Activated CD8-positive, alpha-beta T cell treated with anti-CD3 and anti-CD28 coated beads for 36 hours (primary cell): ENCODE measurements at regions of chr5 and their contacts with region 1.

Region 1: GRCh38 chr5:32076699-32077695 is 97.1 kb downstream of the GOLPH3 start:
- DNase-seq: peak; percentile 69
- ATAC-seq: no peak
- H3K4me3 Mint-ChIP-seq: no peak overlapping the region
- H3K27ac Mint-ChIP-seq: no peak overlapping the region
- H3K4me1 Mint-ChIP-seq: no peaks in the 10 kb centered on the region
- H3K27me3 Mint-ChIP-seq: no peaks in the 10 kb centered on the region
- CTCF ChIP-seq: peak; percentile 85

Region 2: GRCh38 chr5:31581498-31582099 is 495.4 kb before region 1 on chr5:
- CTCF ChIA-PET with region 1: interaction called, 5 read pairs
- POLR2A ChIA-PET with region 1: no interaction called
- intact Hi-C with region 1: loop called (anchors 5 kb)
- DNase-seq: no peak
- ATAC-seq: no peak
- H3K4me3 Mint-ChIP-seq: no peak overlapping the region
- H3K27ac Mint-ChIP-seq: no peak overlapping the region
- H3K4me1 Mint-ChIP-seq: no peaks in the 10 kb centered on the region
- H3K27me3 Mint-ChIP-seq: peaks cover 17% of the 10 kb centered on the region
- CTCF ChIP-seq: peak; percentile 60

Region 3: GRCh38 chr5:31825518-31826068 is 251.4 kb before region 1 on chr5:
- CTCF ChIA-PET with region 1: interaction called, 40 read pairs
- POLR2A ChIA-PET with region 1: no interaction called
- intact Hi-C with region 1: loop called (anchors 5 kb)
- DNase-seq: peak; percentile 62
- ATAC-seq: peak; percentile 68
- H3K4me3 Mint-ChIP-seq: no peak overlapping the region
- H3K27ac Mint-ChIP-seq: no peak overlapping the region
- H3K4me1 Mint-ChIP-seq: peaks cover 3% of the 10 kb centered on the region
- H3K27me3 Mint-ChIP-seq: peaks cover 12% of the 10 kb centered on the region
- CTCF ChIP-seq: peak; percentile 51

Region 4: DNA sequence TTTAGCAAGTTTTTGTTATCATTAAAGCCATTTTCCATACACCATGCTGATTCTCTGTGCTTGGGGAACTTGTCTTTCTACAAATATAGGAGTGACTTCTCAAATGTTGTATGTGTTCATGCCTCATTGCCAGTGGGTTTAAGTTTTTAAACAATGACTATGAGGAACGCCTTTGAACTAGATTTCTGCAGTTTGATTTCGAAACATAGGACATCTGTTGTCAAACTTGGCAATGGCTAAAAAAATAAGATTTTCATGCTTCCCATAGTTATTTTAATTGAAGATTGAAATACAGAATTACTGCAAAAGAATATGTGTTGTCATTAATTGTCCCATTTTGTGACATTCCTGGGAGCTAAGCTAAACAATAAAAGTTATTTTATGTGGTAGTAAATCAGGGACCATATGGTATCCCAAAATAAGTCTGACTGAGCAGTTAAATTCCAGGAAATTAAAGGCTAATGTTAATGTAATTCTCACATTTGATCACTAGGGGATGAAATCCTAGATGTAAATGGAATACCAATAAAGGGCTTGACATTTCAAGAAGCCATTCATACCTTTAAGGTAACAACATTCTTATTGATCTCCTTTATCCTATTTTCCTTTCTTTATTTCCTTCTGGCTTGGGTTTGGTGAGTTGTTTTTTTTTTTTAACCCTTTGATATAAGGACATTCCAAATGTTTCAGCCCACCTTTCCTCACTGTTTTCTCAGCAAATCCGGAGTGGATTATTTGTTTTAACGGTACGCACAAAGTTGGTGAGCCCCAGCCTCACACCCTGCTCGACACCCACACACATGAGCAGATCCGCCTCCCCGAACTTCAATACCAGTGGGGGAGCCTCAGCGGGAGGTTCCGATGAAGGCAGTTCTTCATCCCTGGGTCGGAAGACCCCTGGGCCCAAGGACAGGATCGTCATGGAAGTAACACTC is 19.6 kb before region 1 on chr5:
- CTCF ChIA-PET with region 1: interaction called, 13 read pairs
- POLR2A ChIA-PET with region 1: no interaction called
- intact Hi-C with region 1: no loop called
- DNase-seq: no peak
- ATAC-seq: no peak
- H3K4me3 Mint-ChIP-seq: no peak overlapping the region
- H3K27ac Mint-ChIP-seq: no peak overlapping the region
- H3K4me1 Mint-ChIP-seq: no peaks in the 10 kb centered on the region
- H3K27me3 Mint-ChIP-seq: no peaks in the 10 kb centered on the region
- CTCF ChIP-seq: peak; percentile 32